Activated CD4-positive, alpha-beta T cell treated with anti-CD3 and anti-CD28 coated beads for 36 hours (primary cell): ENCODE measurements at regions of chr2 and their contacts with region 1.

Region 1: GRCh38 chr2:30942419-30942818 is 135.2 kb upstream of the CAPN13 start:
- DNase-seq: no peak
- ATAC-seq: no peak
- H3K4me3 Mint-ChIP-seq: no peak overlapping the region
- H3K27ac Mint-ChIP-seq: no peak overlapping the region
- H3K4me1 Mint-ChIP-seq: peaks cover under 1% of the 10 kb centered on the region
- H3K27me3 Mint-ChIP-seq: peaks cover 2% of the 10 kb centered on the region

Region 2: GRCh38 chr2:31428001-31428418 is 485.6 kb after region 1 on chr2:
- CTCF ChIA-PET with region 1: no interaction called
- POLR2A ChIA-PET with region 1: interaction called, 11 read pairs
- intact Hi-C with region 1: no loop called
- DNase-seq: peak; percentile 25
- ATAC-seq: no peak
- H3K4me3 Mint-ChIP-seq: no peak overlapping the region
- H3K27ac Mint-ChIP-seq: no peak overlapping the region
- H3K4me1 Mint-ChIP-seq: peaks cover 18% of the 10 kb centered on the region
- H3K27me3 Mint-ChIP-seq: peaks cover 19% of the 10 kb centered on the region